B cell (primary cell): ENCODE measurements at regions of chr13 and their contacts with region 1.

Region 1: GRCh38 chr13:50911937-50912795 is 2.6 kb downstream of the RNASEH2B start:
- DNase-seq: peak; percentile 92
- ATAC-seq: peak; percentile 56
- H3K4me3 ChIP-seq: peak overlapping the region; percentile 71 to 94 (median 87)
- H3K4me3 Mint-ChIP-seq: peak overlapping the region; percentile 95
- H3K27ac ChIP-seq: peak overlapping the region; percentile 95 to 98
- H3K27ac Mint-ChIP-seq: peak overlapping the region; percentile 97
- H3K4me1 ChIP-seq: peaks cover 56 to 59% of the 10 kb centered on the region in 2 donors
- H3K4me1 Mint-ChIP-seq: peaks cover 70% of the 10 kb centered on the region
- H3K27me3 ChIP-seq: no peaks in the 10 kb centered on the region
- H3K27me3 Mint-ChIP-seq: no peaks in the 10 kb centered on the region
- CTCF ChIP-seq: peak; percentile 89

Region 2: DNA sequence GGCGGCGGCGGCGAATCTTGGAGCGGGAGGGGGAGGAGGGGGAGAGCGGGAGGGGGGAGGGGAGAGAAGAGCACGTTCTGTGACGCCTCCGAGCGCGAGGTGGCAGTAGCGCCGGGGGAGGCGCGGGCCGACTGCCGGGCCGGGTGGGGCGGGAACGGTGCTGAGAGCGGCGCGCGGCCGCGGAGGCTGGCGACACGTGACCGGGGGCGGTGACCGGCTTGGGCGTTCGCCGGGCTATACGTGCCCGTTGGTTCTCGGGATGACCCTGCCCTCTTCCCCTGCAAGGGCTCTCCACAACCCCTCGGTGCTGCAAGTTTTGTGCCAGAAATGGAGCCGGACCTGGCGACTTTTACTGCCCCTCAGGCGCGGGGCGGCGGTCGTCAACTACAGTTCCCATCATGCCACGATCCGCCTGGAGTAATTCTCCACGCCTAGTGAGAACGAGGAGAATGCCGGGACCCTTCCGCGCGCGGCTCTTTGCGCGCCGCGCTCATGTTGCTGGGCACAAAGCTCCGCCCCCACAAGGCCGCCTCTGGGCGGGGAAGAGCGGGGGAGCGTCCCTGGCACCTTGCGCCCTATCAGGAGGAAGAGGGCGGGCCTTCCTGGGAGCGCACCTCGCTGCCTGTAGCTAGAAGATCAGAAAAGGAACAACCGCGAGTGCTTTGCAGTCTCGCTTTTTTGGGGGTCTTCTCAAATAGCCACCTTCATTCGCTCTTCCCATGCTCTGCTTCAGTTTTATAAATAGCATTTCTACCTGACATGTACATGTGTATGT is 1119.4 kb before region 1 on chr13 and contains the start of gene KPNA3:
- CTCF ChIA-PET with region 1: interaction called, 3 read pairs
- POLR2A ChIA-PET with region 1: no interaction called
- intact Hi-C with region 1: loop called (anchors 5 kb)
- DNase-seq: peak; percentile 97
- ATAC-seq: peak; percentile 87
- H3K4me3 ChIP-seq: peak within 1 kb of the TSS; percentile 79 to 88 (median 80)
- H3K4me3 Mint-ChIP-seq: peak within 1 kb of the TSS; percentile 97
- H3K27ac ChIP-seq: peak within 1 kb of the TSS; percentile 85 to 91
- H3K27ac Mint-ChIP-seq: peak within 1 kb of the TSS; percentile 99
- H3K4me1 ChIP-seq: peaks cover 20 to 21% of the 10 kb centered on the region in 2 donors
- H3K4me1 Mint-ChIP-seq: peaks cover 34% of the 10 kb centered on the region
- H3K27me3 ChIP-seq: no peaks in the 10 kb centered on the region
- H3K27me3 Mint-ChIP-seq: peaks cover 4% of the 10 kb centered on the region
- CTCF ChIP-seq: no peak
- total RNA-seq, gene KPNA3: 19.0 and 19.7 TPM in 2 replicates

Region 3: DNA sequence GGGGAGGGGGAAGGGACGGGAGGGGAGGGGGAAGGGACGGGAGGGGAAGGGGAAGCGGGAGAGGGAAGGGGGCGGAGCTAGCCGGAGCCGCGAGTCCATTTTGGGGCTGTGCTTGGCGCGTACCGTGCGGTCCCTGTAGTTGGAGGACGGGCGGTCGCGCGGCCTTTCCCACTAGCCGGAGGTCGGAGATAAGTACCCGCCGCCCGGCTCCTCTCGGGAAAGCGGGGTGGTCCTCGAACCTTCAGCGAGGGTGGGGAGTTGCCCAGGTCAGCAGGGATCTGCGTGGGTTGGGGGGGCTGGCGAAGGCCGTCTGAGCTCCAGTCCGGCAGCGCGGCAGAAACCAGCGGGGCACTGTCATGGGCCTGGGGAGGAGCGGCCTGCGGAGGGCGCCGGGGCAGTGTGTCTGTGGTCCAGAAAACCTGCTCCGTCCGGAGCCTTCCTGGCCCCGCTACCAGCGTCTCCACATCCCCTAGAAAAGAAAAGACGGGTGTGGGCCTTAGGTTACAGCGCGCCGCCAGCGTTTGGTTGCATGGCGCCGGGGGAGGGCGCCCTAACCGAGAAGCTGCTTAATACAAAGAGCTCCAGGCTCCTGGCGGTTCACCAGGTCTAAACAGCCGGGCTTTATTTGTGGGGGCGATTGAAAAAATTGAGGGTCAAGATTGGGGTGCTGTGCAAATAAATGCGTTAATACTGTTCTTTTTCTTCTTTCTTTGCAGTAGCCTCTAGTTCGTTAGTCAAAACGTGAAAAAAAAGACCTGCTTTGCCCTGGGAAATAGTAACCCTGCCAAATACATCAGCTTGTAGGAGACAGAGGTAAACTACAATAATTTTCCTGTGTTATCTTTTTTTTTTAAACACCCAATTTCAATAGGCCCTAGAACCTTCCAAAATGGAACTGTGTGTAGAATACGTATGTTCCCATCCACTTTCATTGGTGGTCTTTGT is 914.9 kb before region 1 on chr13 and contains the start of gene TRIM13:
- CTCF ChIA-PET with region 1: interaction called, 39 read pairs
- POLR2A ChIA-PET with region 1: interaction called, 14 read pairs
- intact Hi-C with region 1: loop called (anchors 1 kb)
- DNase-seq: peak; percentile 93
- ATAC-seq: peak; percentile 74
- H3K4me3 ChIP-seq: peak within 1 kb of the TSS; percentile 78 to 96 (median 94)
- H3K4me3 Mint-ChIP-seq: peak within 1 kb of the TSS; percentile 90
- H3K27ac ChIP-seq: peak within 1 kb of the TSS; percentile 93
- H3K27ac Mint-ChIP-seq: peak within 1 kb of the TSS; percentile 96
- H3K4me1 ChIP-seq: peaks cover 30 to 42% of the 10 kb centered on the region in 2 donors
- H3K4me1 Mint-ChIP-seq: peaks cover 49% of the 10 kb centered on the region
- H3K27me3 ChIP-seq: no peaks in the 10 kb centered on the region
- H3K27me3 Mint-ChIP-seq: no peaks in the 10 kb centered on the region
- CTCF ChIP-seq: peak; percentile 89
- total RNA-seq, gene TRIM13: 45.9 and 52.8 TPM in 2 replicates

Region 4: GRCh38 chr13:50236898-50237318 is 675.3 kb before region 1 on chr13:
- CTCF ChIA-PET with region 1: interaction called, 11 read pairs
- POLR2A ChIA-PET with region 1: no interaction called
- intact Hi-C with region 1: loop called (anchors 5 kb)
- DNase-seq: peak; percentile 61
- ATAC-seq: peak; percentile 79
- H3K4me3 ChIP-seq: peak overlapping the region in 3 of 5 experiments; percentile 13 to 59 (median 35)
- H3K4me3 Mint-ChIP-seq: peak overlapping the region; percentile 88
- H3K27ac ChIP-seq: peak overlapping the region in 1 of 2 donors; percentile 13
- H3K27ac Mint-ChIP-seq: peak overlapping the region; percentile 83
- H3K4me1 ChIP-seq: peaks cover 3 to 8% of the 10 kb centered on the region in 2 donors
- H3K4me1 Mint-ChIP-seq: peaks cover 27% of the 10 kb centered on the region
- H3K27me3 ChIP-seq: no peaks in the 10 kb centered on the region
- H3K27me3 Mint-ChIP-seq: no peaks in the 10 kb centered on the region
- CTCF ChIP-seq: no peak

Region 5: GRCh38 chr13:50635504-50635903 is 276.7 kb before region 1 on chr13:
- CTCF ChIA-PET with region 1: interaction called, 10 read pairs
- POLR2A ChIA-PET with region 1: interaction called, 4 read pairs
- intact Hi-C with region 1: loop called (anchors 1 kb)
- DNase-seq: peak; percentile 90
- ATAC-seq: peak; percentile 79
- H3K4me3 ChIP-seq: no peak overlapping the region
- H3K4me3 Mint-ChIP-seq: peak overlapping the region; percentile 63
- H3K27ac ChIP-seq: peak overlapping the region; percentile 92 to 95
- H3K27ac Mint-ChIP-seq: peak overlapping the region; percentile 96
- H3K4me1 ChIP-seq: peaks cover 26 to 30% of the 10 kb centered on the region in 2 donors
- H3K4me1 Mint-ChIP-seq: peaks cover 44% of the 10 kb centered on the region
- H3K27me3 ChIP-seq: no peaks in the 10 kb centered on the region
- H3K27me3 Mint-ChIP-seq: no peaks in the 10 kb centered on the region
- CTCF ChIP-seq: no peak

Region 6: DNA sequence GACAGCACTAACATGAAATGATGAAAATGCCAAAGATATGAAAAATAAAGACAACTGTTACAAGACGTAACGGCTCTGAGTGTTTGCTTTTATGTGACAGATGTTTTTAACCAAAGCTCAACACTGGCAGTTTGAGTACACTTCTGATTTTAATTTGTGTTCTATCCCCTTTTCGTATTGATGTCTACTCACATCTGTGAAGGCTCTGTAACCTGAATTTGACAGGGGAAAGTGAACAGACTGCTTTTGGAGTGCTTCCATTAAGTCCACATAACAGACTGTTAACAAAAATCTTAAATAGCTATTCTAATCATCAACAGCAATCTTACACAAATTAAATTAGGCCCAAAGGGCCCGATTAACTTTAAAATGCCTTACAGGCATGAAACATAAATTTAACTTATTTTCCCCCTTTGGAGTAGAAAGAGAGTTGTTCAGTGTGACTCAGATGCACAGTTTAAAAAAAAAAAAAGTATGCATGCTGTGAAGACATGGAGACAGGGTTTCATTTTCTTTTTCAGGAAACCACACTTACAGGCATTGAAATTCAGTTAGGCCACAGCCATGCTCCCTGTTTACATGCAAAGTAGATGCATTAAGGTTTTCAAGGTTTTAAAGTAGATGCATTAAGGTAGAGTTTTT is 18.8 kb before region 1 on chr13:
- CTCF ChIA-PET with region 1: interaction called, 21 read pairs
- POLR2A ChIA-PET with region 1: interaction called, 28 read pairs
- intact Hi-C with region 1: loop called (anchors 1 kb)
- DNase-seq: peak; percentile 64
- ATAC-seq: peak; percentile 83
- H3K4me3 ChIP-seq: peak overlapping the region in 4 of 5 experiments; percentile 11 to 55 (median 30)
- H3K4me3 Mint-ChIP-seq: peak overlapping the region; percentile 85
- H3K27ac ChIP-seq: peak overlapping the region; percentile 76 to 78
- H3K27ac Mint-ChIP-seq: peak overlapping the region; percentile 95
- H3K4me1 ChIP-seq: peaks cover 53 to 56% of the 10 kb centered on the region in 2 donors
- H3K4me1 Mint-ChIP-seq: peaks cover 57% of the 10 kb centered on the region
- H3K27me3 ChIP-seq: no peaks in the 10 kb centered on the region
- H3K27me3 Mint-ChIP-seq: no peaks in the 10 kb centered on the region
- CTCF ChIP-seq: no peak

Region 7: DNA sequence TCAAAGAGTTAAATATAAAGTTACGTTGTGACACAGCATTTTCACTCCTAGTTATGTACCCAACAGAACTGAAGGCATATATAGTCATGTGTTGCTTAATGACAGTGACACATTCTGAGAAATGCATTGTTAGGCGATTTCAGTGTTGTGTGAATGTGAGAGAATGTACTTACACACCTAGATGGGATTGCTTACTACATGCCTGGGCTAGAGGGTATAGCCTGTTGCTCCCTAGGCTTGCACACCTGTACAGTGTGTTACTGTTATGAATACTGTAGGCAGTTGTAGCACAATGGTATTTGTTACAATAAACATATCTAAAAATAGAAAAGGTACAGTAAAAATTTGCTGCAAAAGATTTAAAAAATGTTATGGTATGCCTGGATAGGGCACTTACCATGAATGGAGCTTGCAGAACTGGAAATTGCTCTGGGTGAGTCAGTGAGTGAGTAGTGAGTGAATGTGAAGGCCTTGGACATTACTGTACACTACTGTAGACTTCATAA is 802.5 kb after region 1 on chr13:
- CTCF ChIA-PET with region 1: no interaction called
- POLR2A ChIA-PET with region 1: no interaction called
- intact Hi-C with region 1: no loop called
- DNase-seq: no peak
- ATAC-seq: no peak
- H3K4me3 ChIP-seq: no peak overlapping the region
- H3K4me3 Mint-ChIP-seq: no peak overlapping the region
- H3K27ac ChIP-seq: no peak overlapping the region
- H3K27ac Mint-ChIP-seq: no peak overlapping the region
- H3K4me1 ChIP-seq: no peaks in the 10 kb centered on the region
- H3K4me1 Mint-ChIP-seq: peaks cover 2% of the 10 kb centered on the region
- H3K27me3 ChIP-seq: no peaks in the 10 kb centered on the region
- H3K27me3 Mint-ChIP-seq: no peaks in the 10 kb centered on the region
- CTCF ChIP-seq: no peak